K562 (cell line): ENCODE measurements at regions of chr4 and their contacts with region 1.

Region 1: GRCh38 chr4:159298502-159298901 is 195.6 kb downstream of the RAPGEF2 start:
- DNase-seq: no peak
- ATAC-seq: no peak
- H3K4me3 ChIP-seq: no peak overlapping the region
- H3K27ac ChIP-seq: no peak overlapping the region
- H3K4me1 ChIP-seq: no peaks in the 10 kb centered on the region
- H3K27me3 ChIP-seq: no peaks in the 10 kb centered on the region
- CTCF ChIP-seq: no peak
- EP300 ChIP-seq: no peak
- POLR2A ChIP-seq: no peak
- RAD21 ChIP-seq: no peak

Region 2: DNA sequence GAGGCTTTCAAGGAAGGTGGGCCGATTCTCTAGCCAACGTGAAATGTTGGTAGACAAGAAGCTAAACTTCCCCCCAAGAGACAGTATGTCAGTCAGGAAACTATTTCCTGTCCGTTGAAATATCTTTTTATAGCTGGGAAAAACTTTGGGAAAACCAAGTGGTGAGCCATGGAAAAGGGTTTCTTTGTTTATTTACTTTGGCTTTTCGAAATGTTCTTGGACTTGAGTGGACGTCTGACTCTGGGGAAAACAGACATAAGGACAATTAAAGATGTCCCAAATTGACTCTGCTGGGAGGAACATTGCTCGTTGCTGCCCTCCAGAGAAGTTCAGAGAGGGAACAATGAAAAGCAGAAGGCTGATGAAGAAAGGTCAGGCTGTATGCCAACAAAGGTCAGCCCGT is 99.7 kb after region 1 on chr4:
- CTCF ChIA-PET with region 1: no interaction called
- POLR2A ChIA-PET with region 1: no interaction called
- in situ Hi-C with region 1: no loop called
- intact Hi-C with region 1: loop called (anchors 5 kb)
- DNase-seq: no peak
- ATAC-seq: no peak; the same call in 2 of the 3 replicates
- H3K4me3 ChIP-seq: no peak overlapping the region
- H3K27ac ChIP-seq: no peak overlapping the region
- H3K4me1 ChIP-seq: no peaks in the 10 kb centered on the region; a peak in 1 of 5 replicates
- H3K27me3 ChIP-seq: peaks cover 6 to 18% of the 10 kb centered on the region in 2 experiments; a peak in 4 of 5 replicates
- CTCF ChIP-seq: peak in 1 of 3 experiments; percentile 6; a peak in 1 of 6 replicates
- EP300 ChIP-seq: no peak
- POLR2A ChIP-seq: no peak
- RAD21 ChIP-seq: no peak

Region 3: DNA sequence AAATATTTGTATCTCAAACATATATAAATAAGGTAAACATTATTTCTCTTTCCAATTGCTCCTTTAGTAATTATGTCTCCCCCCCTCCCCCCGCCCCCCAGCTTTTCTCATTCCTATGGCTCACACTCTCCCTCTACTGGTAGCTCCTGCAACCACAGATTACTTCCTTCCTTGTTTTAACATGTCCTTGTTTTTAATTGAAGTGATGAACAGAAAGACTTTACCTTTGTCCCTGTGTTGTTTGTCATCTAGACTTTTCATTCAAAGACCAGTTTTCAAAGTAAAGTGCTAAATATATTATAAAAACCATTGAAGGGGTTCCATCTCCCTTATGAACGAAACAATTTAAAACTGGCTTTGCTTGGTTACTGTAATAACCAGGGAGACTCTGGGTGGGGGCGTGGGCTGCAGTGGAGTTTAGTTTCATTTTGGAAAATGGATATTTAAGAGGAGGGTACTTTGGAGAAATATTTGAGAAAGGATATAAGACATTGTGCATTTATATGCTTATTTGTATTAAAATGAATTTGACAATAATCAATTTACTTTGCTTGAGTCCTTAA is 157.3 kb after region 1 on chr4:
- CTCF ChIA-PET with region 1: no interaction called
- POLR2A ChIA-PET with region 1: no interaction called
- in situ Hi-C with region 1: no loop called
- intact Hi-C with region 1: no loop called
- DNase-seq: peak; percentile 68 to 76 (median 70)
- ATAC-seq: peak; percentile 89
- H3K4me3 ChIP-seq: no peak overlapping the region
- H3K27ac ChIP-seq: no peak overlapping the region
- H3K4me1 ChIP-seq: no peaks in the 10 kb centered on the region; a peak in 1 of 5 replicates
- H3K27me3 ChIP-seq: no peaks in the 10 kb centered on the region
- CTCF ChIP-seq: peak; percentile 61 to 78 (median 76)
- EP300 ChIP-seq: no peak
- POLR2A ChIP-seq: no peak
- RAD21 ChIP-seq: peak; percentile 44 to 50